Stomach (tissue), 19 donors: ENCODE measurements at regions of chr1 and their contacts with region 1.

Region 1: DNA sequence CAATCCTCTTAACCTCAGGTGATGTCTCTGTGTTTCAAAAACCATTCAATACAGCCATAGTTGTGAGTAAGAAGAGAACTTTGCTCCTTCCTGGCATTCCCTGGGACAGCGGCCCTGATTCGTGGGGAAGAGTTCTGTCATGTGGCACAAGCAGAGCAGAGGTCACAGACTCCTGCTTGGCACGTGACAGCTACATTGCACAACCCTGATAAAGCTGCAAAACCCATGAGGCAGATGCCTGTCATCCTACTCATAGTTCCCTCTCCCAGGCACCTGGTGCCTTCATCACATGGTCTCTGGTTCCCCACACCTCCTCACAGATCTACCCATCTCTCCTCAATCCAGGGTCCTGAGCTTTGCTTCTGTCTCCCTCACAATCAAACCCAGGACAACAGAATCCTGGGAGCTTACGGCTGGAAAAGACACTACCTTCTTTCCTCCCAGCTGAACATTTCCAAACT is 70.8 kb downstream of the PLPP3 start:
- DNase-seq: peak; percentile 78
- H3K4me3 ChIP-seq: no peak overlapping the region
- H3K27ac ChIP-seq: peak overlapping the region; percentile 27 to 62 (median 36)
- H3K4me1 ChIP-seq: peaks cover 43 to 66% (median 51%) of the 10 kb centered on the region in 4 donors
- H3K27me3 ChIP-seq: no peaks in the 10 kb centered on the region
- CTCF ChIP-seq: no peak
- EP300 ChIP-seq: no peak
- POLR2A ChIP-seq: no peak

Region 2: GRCh38 chr1:56569661-56570060 is 61.1 kb after region 1 on chr1:
- intact Hi-C with region 1: loop called (anchors 10 kb)
- DNase-seq: peak in 1 of 2 donors; percentile 22
- H3K4me3 ChIP-seq: no peak overlapping the region
- H3K27ac ChIP-seq: peak overlapping the region in 3 of 5 donors; percentile 36 to 66 (median 38)
- H3K4me1 ChIP-seq: peaks cover 48 to 85% (median 62%) of the 10 kb centered on the region in 4 donors
- H3K27me3 ChIP-seq: no peaks in the 10 kb centered on the region
- CTCF ChIP-seq: no peak
- EP300 ChIP-seq: no peak
- POLR2A ChIP-seq: no peak